T-cell (primary cell): ENCODE measurements at regions of chr6 and their contacts with region 1.

Region 1: GRCh38 chr6:16700202-16700915 is 60.9 kb downstream of the ATXN1 start:
- DNase-seq: peak in 24 of 35 experiments; percentile 16 to 63 (median 30)
- ATAC-seq: peak; percentile 40 to 72 (median 52)
- H3K4me3 ChIP-seq: peak overlapping the region; percentile 51 to 55
- H3K4me3 Mint-ChIP-seq: peak overlapping the region; percentile 73 to 86 (median 81)
- H3K27ac ChIP-seq: peak overlapping the region; percentile 83
- H3K27ac Mint-ChIP-seq: peak overlapping the region; percentile 92 to 96
- H3K4me1 ChIP-seq: peaks cover 2 to 40% of the 10 kb centered on the region in 2 experiments
- H3K4me1 Mint-ChIP-seq: peaks cover 59 to 75% (median 70%) of the 10 kb centered on the region in 3 donors
- H3K27me3 ChIP-seq: no peaks in the 10 kb centered on the region
- H3K27me3 Mint-ChIP-seq: no peaks in the 10 kb centered on the region

Region 2: GRCh38 chr6:16657768-16658167 is 42.6 kb before region 1 on chr6:
- CTCF ChIA-PET with region 1: interaction called in 1 of 2 experiments, 5 read pairs
- POLR2A ChIA-PET with region 1: interaction called in 1 of 2 experiments, 12 read pairs
- DNase-seq: peak in 1 of 35 experiments; percentile 45
- ATAC-seq: peak in 2 of 4 experiments; percentile 20 to 40
- H3K4me3 ChIP-seq: no peak overlapping the region
- H3K4me3 Mint-ChIP-seq: peak overlapping the region; percentile 38 to 48 (median 44)
- H3K27ac ChIP-seq: peak overlapping the region; percentile 71
- H3K27ac Mint-ChIP-seq: peak overlapping the region; percentile 88 to 97
- H3K4me1 ChIP-seq: peaks cover 10 to 42% of the 10 kb centered on the region in 2 experiments
- H3K4me1 Mint-ChIP-seq: peaks cover 59 to 70% (median 61%) of the 10 kb centered on the region in 3 donors
- H3K27me3 ChIP-seq: no peaks in the 10 kb centered on the region
- H3K27me3 Mint-ChIP-seq: no peaks in the 10 kb centered on the region